ENCODE measurements at regions of chr11 and their contacts with region 1.

Region 1: DNA sequence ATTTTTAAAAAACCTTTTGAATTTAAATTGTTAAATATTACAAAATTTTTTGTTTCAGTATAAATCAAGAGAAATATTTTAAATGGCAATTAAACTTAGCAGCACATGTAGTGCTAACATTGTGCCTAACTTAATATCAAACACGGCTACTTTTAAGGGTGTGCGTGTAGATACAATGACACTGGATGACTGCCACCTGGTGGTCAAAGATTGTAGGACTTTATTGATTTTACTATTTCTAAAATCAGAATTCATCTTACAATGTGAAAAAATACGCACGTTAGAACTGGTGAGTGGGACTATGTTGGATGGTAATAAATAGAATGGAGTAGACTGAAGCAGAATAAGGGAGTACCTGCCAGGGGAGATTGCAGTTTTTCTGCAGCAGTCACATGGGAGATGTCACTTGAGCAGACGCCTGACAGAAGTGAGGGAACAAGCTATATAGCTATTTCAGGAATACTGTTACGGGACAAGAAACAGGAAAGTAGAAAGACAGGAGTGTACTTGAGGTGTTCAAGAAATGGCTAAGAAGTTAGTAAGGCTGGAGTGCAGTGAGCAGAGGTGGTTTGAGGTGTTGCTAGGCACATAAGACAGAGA is 52.9 kb downstream of the UVRAG start:
- DNase-seq: peak; percentile 62
- ATAC-seq: peak; percentile 75
- H3K4me3 ChIP-seq: no peak overlapping the region
- H3K27ac ChIP-seq: no peak overlapping the region
- H3K4me1 ChIP-seq: no peaks in the 10 kb centered on the region
- H3K27me3 ChIP-seq: no peaks in the 10 kb centered on the region
- CTCF ChIP-seq: peak; percentile 75
- POLR2A ChIP-seq: no peak
- RAD21 ChIP-seq: peak; percentile 77

Region 2: GRCh38 chr11:75388386-75389275 is 479.2 kb before region 1 on chr11:
- CTCF ChIA-PET with region 1: no interaction called
- POLR2A ChIA-PET with region 1: no interaction called
- dilution Hi-C with region 1: no loop called
- in situ Hi-C with region 1: no loop called
- intact Hi-C with region 1: loop called (anchors 5 kb)
- DNase-seq: peak; percentile 81
- ATAC-seq: peak; percentile 91
- H3K4me3 ChIP-seq: no peak overlapping the region
- H3K27ac ChIP-seq: no peak overlapping the region
- H3K4me1 ChIP-seq: peaks cover 4% of the 10 kb centered on the region
- H3K27me3 ChIP-seq: peaks cover 4% of the 10 kb centered on the region
- CTCF ChIP-seq: peak; percentile 93
- POLR2A ChIP-seq: no peak
- RAD21 ChIP-seq: peak; percentile 91

Region 3: GRCh38 chr11:75445315-75445953 is 422.4 kb before region 1 on chr11:
- CTCF ChIA-PET with region 1: no interaction called
- POLR2A ChIA-PET with region 1: no interaction called
- dilution Hi-C with region 1: no loop called
- in situ Hi-C with region 1: no loop called
- intact Hi-C with region 1: loop called (anchors 5 kb)
- DNase-seq: peak; percentile 41
- ATAC-seq: peak; percentile 99
- H3K4me3 ChIP-seq: no peak overlapping the region
- H3K27ac ChIP-seq: no peak overlapping the region
- H3K4me1 ChIP-seq: no peaks in the 10 kb centered on the region
- H3K27me3 ChIP-seq: peaks cover 3% of the 10 kb centered on the region; the same call in 1 of the 2 replicates
- CTCF ChIP-seq: peak; percentile 95
- POLR2A ChIP-seq: peak; percentile 63; the same call in 1 of the 2 replicates
- RAD21 ChIP-seq: peak; percentile 100

Region 4: DNA sequence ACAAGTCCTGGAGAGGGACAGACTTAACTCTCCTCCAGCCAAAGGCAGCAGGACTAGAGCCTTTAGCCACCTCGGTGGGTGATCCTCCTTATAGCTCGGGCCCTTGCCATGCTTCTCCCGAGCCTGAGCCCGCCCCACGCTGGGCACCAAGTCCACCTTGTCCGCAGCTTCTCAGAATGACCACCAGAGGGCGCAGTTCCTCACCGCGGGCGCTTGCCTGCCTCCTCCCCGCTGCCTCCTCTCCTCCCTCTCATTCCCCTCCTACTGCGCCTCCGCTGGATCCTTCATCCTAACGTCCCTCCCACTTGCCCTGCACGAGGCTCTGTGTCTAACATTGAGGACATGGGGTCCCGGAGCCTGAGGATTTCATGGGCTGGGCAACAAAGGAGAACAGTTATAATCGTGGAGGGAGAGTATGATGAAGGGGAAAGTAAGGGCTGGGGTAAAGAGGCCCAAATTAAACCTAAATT is 161.6 kb before region 1 on chr11:
- CTCF ChIA-PET with region 1: no interaction called
- POLR2A ChIA-PET with region 1: no interaction called
- dilution Hi-C with region 1: no loop called
- in situ Hi-C with region 1: no loop called
- intact Hi-C with region 1: loop called (anchors 5 kb)
- DNase-seq: peak; percentile 64
- ATAC-seq: peak; percentile 98
- H3K4me3 ChIP-seq: no peak overlapping the region
- H3K27ac ChIP-seq: no peak overlapping the region
- H3K4me1 ChIP-seq: no peaks in the 10 kb centered on the region
- H3K27me3 ChIP-seq: peaks cover 9% of the 10 kb centered on the region
- CTCF ChIP-seq: peak; percentile 75
- POLR2A ChIP-seq: no peak
- RAD21 ChIP-seq: peak; percentile 55

Region 5: GRCh38 chr11:75721855-75722668 is 145.8 kb before region 1 on chr11:
- CTCF ChIA-PET with region 1: no interaction called
- POLR2A ChIA-PET with region 1: no interaction called
- dilution Hi-C with region 1: no loop called
- in situ Hi-C with region 1: no loop called
- intact Hi-C with region 1: loop called (anchors 2 kb)
- DNase-seq: no peak
- ATAC-seq: no peak
- H3K4me3 ChIP-seq: no peak overlapping the region
- H3K27ac ChIP-seq: no peak overlapping the region
- H3K4me1 ChIP-seq: no peaks in the 10 kb centered on the region
- H3K27me3 ChIP-seq: peaks cover 36% of the 10 kb centered on the region
- CTCF ChIP-seq: no peak
- POLR2A ChIP-seq: no peak
- RAD21 ChIP-seq: no peak

Region 6: DNA sequence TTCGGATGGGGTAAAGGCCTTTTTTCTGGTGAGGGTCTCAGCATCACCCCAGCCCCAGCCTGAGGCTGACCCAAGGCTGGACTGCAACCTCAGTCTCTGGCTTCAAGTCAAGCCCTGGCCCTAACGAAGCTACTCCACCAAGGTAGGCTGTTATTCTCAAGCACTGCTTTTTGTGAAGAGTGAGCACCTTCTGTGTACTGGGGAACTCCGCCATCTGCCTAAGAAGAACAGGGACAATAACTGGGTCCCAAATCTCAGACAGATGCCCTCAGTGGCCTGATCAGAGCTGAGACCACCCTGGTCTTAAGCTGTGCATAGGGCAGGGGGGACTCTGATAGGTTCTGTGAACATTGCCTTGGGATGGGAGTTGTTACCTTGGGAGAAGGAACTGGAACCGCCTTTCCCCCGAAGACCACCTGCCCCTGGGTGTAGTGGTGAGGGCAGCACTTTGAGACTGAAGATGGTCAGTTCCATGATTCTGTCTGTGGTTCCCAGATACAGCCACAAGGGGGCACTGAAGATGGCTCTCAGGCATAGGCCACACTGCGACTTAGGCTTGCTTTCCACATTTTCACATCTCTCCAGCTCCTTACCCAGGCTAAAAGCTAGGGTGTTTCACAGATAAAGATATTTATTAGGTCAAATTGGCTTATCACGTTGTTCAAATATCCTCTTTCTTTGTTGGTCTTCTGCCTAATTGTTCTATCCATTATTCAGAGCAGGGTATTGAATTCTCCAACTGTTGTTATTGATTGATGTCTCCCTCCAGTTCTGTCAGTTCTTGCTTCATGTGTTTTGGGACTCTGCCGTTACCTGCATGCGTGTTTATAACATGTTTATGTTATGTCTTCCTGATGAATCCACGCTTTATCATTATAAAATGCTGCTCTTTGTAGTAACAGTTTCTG is 64.7 kb before region 1 on chr11:
- CTCF ChIA-PET with region 1: interaction called, 4 read pairs
- POLR2A ChIA-PET with region 1: no interaction called
- dilution Hi-C with region 1: no loop called
- in situ Hi-C with region 1: no loop called
- intact Hi-C with region 1: loop called (anchors 1 kb)
- DNase-seq: peak; percentile 65
- ATAC-seq: peak; percentile 99
- H3K4me3 ChIP-seq: no peak overlapping the region
- H3K27ac ChIP-seq: no peak overlapping the region
- H3K4me1 ChIP-seq: no peaks in the 10 kb centered on the region
- H3K27me3 ChIP-seq: no peaks in the 10 kb centered on the region
- CTCF ChIP-seq: peak; percentile 91
- POLR2A ChIP-seq: no peak
- RAD21 ChIP-seq: peak; percentile 88

Region 7: GRCh38 chr11:75814686-75815344 is 53.1 kb before region 1 on chr11 and contains the start of gene UVRAG:
- CTCF ChIA-PET with region 1: interaction called, 3 read pairs
- POLR2A ChIA-PET with region 1: no interaction called
- dilution Hi-C with region 1: no loop called
- in situ Hi-C with region 1: no loop called
- intact Hi-C with region 1: loop called (anchors 5 kb)
- DNase-seq: peak; percentile 99
- ATAC-seq: peak; percentile 97
- H3K4me3 ChIP-seq: peak within 1 kb of the TSS; percentile 59
- H3K27ac ChIP-seq: peak within 1 kb of the TSS; percentile 47
- H3K4me1 ChIP-seq: peaks cover 8% of the 10 kb centered on the region
- H3K27me3 ChIP-seq: 0 out of 2 replicates have a peak, but pooled peaks cover 2% of the 10 kb centered on the region
- CTCF ChIP-seq: no peak
- POLR2A ChIP-seq: no peak; the same call in 1 of the 2 replicates
- RAD21 ChIP-seq: no peak
- total RNA-seq, gene UVRAG: 10.9 and 12.8 TPM in 2 replicates

Measured in IMR-90 (cell line).